CD8-positive, alpha-beta T cell (primary cell): ENCODE measurements at regions of chr17 and their contacts with region 1.

Region 1: GRCh38 chr17:64129764-64130558 is at the start of gene ERN1:
- DNase-seq: peak; percentile 83 to 96 (median 90)
- ATAC-seq: peak; percentile 90
- H3K4me3 ChIP-seq: peak within 1 kb of the TSS; percentile 70 to 76
- H3K4me3 Mint-ChIP-seq: peak within 1 kb of the TSS; percentile 89
- H3K27ac ChIP-seq: peak within 1 kb of the TSS; percentile 82 to 96
- H3K27ac Mint-ChIP-seq: peak within 1 kb of the TSS; percentile 97
- H3K4me1 ChIP-seq: peaks cover 23% of the 10 kb centered on the region
- H3K4me1 Mint-ChIP-seq: peaks cover 46% of the 10 kb centered on the region
- H3K27me3 ChIP-seq: no peaks in the 10 kb centered on the region
- H3K27me3 Mint-ChIP-seq: no peaks in the 10 kb centered on the region
- CTCF ChIP-seq: no peak
- total RNA-seq, gene ERN1: 57.1 to 64.0 TPM

Region 2: DNA sequence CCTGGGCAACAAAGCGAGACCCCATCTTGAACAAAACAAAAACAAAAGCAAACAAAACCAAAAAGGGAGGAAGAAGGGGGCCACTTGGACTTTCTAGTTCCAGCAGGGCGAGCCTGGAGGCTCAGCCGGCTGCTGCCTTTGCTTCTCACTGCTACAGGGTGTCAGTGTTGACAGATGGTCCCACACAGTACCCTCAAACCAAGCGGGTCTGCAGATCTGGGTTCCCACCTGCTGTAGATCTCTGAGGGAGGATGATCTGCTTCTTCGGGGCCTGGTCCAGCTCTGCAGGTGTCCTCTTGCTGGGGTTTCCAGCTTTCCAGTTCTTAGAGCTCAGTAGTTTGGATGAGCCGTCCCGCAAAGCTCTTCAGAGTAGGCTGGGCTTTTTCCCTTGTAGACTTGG is 225.6 kb before region 1 on chr17:
- CTCF ChIA-PET with region 1: interaction called, 11 read pairs
- POLR2A ChIA-PET with region 1: no interaction called
- intact Hi-C with region 1: no loop called
- DNase-seq: no peak
- ATAC-seq: no peak
- H3K4me3 ChIP-seq: no peak overlapping the region
- H3K4me3 Mint-ChIP-seq: no peak overlapping the region
- H3K27ac ChIP-seq: no peak overlapping the region
- H3K27ac Mint-ChIP-seq: no peak overlapping the region
- H3K4me1 ChIP-seq: no peaks in the 10 kb centered on the region
- H3K4me1 Mint-ChIP-seq: peaks cover 4% of the 10 kb centered on the region
- H3K27me3 ChIP-seq: no peaks in the 10 kb centered on the region
- H3K27me3 Mint-ChIP-seq: no peaks in the 10 kb centered on the region
- CTCF ChIP-seq: no peak

Region 3: DNA sequence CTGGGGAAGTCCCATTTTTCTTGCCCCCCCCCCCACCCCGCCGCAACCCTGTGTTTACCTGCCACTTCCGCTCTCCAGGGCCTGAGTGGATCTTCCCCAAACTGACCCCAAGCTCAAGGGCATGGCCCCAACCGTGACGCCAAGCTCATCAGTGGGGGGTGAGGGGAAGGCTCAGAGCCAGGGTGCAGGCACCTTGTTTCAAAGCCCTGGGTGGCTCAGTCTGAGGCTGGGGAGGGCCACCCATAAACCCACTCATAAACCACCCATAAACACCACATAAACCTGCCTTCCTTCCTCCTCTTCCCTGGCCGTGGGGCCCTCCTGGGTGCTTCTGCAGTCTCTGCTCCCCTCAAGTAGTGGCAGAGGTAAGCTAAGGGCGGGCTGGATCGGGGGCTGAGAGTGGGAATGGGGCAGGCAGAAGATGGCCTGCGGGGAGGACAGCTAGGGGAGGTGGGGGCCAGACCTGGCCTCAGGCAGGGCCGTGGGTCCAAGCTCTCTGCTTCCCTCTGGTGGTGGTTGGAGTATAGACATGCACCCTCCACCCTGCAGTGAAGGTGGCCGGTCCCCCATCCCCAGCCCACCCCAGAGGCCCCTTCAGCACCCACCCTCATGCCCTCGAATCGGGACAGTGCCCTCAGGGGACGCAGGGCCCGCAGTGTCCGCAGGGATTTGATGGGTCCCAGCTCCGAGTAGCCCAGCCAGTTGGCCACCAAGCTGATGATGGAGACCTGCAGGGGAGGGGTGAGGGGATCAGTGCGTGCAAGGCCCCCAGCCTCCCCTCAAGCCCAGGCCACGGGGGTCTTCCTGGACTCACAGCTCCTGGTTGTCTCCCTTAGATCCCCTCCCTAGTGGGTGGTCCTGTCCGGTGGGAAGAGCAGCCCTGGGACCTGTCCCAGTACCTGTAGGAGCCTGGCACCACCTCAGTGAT is 183.3 kb before region 1 on chr17:
- CTCF ChIA-PET with region 1: interaction called, 14 read pairs
- POLR2A ChIA-PET with region 1: interaction called, 4 read pairs
- intact Hi-C with region 1: no loop called
- DNase-seq: peak; percentile 22 to 77 (median 60)
- ATAC-seq: peak; percentile 78
- H3K4me3 ChIP-seq: peak overlapping the region; percentile 29 to 47
- H3K4me3 Mint-ChIP-seq: peak overlapping the region; percentile 74
- H3K27ac ChIP-seq: peak overlapping the region in 1 of 2 experiments; percentile 43
- H3K27ac Mint-ChIP-seq: peak overlapping the region; percentile 72
- H3K4me1 ChIP-seq: peaks cover 20% of the 10 kb centered on the region
- H3K4me1 Mint-ChIP-seq: peaks cover 20% of the 10 kb centered on the region
- H3K27me3 ChIP-seq: no peaks in the 10 kb centered on the region
- H3K27me3 Mint-ChIP-seq: no peaks in the 10 kb centered on the region
- CTCF ChIP-seq: peak; percentile 69

Region 4: DNA sequence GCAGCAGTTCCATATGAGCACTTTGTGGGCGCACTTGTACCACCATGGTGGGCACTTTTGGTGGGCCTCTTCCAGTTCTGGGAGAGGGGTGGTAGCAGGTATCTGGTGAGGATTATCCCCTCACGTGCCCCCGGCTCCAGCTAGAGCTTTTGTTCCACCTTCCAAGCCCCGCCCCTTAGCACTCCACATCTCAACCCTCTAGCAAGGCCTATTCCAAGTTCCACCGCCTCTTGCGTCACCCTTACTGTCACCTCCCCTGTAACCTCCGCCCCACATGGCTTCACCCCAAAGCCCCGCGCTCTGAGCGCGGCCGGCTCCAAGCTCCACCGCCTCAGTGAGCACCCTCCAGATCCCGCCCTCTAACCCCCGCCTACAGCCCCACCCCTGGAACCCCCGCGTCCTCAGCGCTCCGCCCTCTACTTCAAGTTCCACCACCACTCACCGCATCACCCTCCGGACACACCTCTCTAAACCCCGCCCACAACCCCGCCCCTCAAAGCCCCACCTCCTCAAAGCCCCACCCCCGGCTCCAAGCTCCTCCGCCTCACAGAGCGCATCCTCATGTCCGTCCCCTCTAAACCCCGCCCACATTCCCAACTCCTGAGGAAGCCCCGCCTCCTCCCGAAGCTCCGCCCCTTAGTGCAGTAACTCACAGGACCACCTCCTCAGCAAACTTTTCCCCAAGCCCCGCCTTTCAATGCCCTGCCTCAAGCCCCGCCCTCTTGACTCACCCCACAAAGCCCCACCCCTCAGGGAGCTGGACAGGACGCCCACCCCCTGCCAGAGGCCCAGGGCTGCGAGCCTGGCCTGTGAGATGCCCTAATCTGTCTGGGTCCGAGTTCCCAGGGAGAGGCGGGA is 168.4 kb before region 1 on chr17:
- CTCF ChIA-PET with region 1: no interaction called
- POLR2A ChIA-PET with region 1: no interaction called
- intact Hi-C with region 1: no loop called
- DNase-seq: peak in 5 of 9 experiments; percentile 20 to 59 (median 42)
- ATAC-seq: peak; percentile 81
- H3K4me3 ChIP-seq: no peak overlapping the region
- H3K4me3 Mint-ChIP-seq: peak overlapping the region; percentile 42
- H3K27ac ChIP-seq: no peak overlapping the region
- H3K27ac Mint-ChIP-seq: no peak overlapping the region
- H3K4me1 ChIP-seq: peaks cover 9% of the 10 kb centered on the region
- H3K4me1 Mint-ChIP-seq: peaks cover 10% of the 10 kb centered on the region
- H3K27me3 ChIP-seq: no peaks in the 10 kb centered on the region
- H3K27me3 Mint-ChIP-seq: no peaks in the 10 kb centered on the region
- CTCF ChIP-seq: no peak

Region 5: DNA sequence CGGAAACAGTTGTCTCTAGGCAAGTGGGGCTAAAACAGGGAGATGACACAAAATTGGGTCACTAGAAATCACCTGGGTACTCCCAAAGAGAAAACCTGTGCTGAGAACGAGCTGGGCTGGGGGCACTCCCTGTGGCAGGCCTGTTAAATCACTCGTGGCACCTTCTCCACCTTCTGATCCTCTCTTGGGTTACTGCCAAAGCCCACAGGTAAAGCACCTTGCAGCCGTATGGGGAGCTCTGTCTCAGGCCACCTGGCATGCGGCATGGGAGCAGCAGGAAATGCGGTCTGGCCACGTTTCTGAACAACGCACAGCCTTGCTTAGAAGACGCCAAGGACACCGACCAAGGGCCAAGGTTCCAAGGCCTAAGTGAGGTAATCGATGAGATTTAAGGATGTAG is 88.0 kb before region 1 on chr17:
- CTCF ChIA-PET with region 1: interaction called, 455 read pairs
- POLR2A ChIA-PET with region 1: interaction called, 3 read pairs
- intact Hi-C with region 1: no loop called
- DNase-seq: no peak
- ATAC-seq: no peak
- H3K4me3 ChIP-seq: no peak overlapping the region
- H3K4me3 Mint-ChIP-seq: no peak overlapping the region
- H3K27ac ChIP-seq: no peak overlapping the region
- H3K27ac Mint-ChIP-seq: peak overlapping the region; percentile 74
- H3K4me1 ChIP-seq: no peaks in the 10 kb centered on the region
- H3K4me1 Mint-ChIP-seq: peaks cover 9% of the 10 kb centered on the region
- H3K27me3 ChIP-seq: no peaks in the 10 kb centered on the region
- H3K27me3 Mint-ChIP-seq: no peaks in the 10 kb centered on the region
- CTCF ChIP-seq: no peak

Region 6: DNA sequence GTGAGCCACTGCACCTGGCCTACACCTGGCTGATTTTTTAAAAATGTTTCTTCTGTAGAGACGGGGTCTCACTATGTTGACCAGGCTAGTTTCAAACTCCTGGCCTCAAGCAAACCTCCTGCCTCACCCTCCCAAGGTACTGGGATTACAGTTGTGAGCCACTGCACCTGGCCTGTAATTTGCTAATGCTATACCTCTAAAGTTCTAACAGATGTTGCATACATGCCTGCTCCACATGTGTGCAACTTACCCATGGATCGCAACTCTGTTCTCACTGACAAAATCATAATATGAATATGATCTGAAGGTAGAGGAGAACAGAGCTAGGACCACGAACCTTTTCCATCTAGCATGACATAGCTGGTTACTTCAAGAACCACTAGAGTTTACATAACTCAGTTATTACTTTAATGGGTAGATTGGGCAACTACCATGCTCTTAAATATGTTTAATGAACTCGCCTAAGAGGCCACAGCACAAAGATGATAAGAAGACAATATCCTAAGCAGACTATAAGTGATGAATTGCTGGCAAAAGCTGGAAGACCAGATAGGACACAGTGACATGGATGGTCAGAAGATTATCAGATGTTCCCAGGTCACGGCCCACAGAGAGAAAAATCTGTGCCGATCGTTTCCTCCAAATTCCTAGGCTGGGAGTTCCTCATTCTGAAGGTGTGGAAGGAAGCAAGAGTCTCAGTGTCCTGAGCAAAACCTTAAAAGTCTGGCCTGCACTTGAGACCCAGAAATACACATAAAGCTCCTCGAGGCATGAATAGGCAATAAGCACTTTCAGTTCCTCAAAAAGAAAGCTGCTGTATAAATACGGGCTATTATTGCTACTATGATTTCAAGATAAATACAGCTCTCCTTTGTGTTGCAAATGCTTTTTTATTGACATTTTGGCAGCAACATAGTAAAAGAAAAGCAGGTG is 55.9 kb before region 1 on chr17:
- CTCF ChIA-PET with region 1: interaction called, 220 read pairs
- POLR2A ChIA-PET with region 1: interaction called, 3 read pairs
- intact Hi-C with region 1: no loop called
- DNase-seq: no peak
- ATAC-seq: no peak
- H3K4me3 ChIP-seq: no peak overlapping the region
- H3K4me3 Mint-ChIP-seq: no peak overlapping the region
- H3K27ac ChIP-seq: no peak overlapping the region
- H3K27ac Mint-ChIP-seq: no peak overlapping the region
- H3K4me1 ChIP-seq: no peaks in the 10 kb centered on the region
- H3K4me1 Mint-ChIP-seq: peaks cover 13% of the 10 kb centered on the region
- H3K27me3 ChIP-seq: no peaks in the 10 kb centered on the region
- H3K27me3 Mint-ChIP-seq: no peaks in the 10 kb centered on the region
- CTCF ChIP-seq: no peak

Region 7: GRCh38 chr17:64145757-64146417 is 15.9 kb after region 1 on chr17:
- CTCF ChIA-PET with region 1: interaction called, 41 read pairs
- POLR2A ChIA-PET with region 1: interaction called, 59 read pairs
- intact Hi-C with region 1: loop called (anchors 1 kb)
- DNase-seq: peak; percentile 88 to 99 (median 95)
- ATAC-seq: peak; percentile 88
- H3K4me3 ChIP-seq: peak overlapping the region; percentile 74 to 95
- H3K4me3 Mint-ChIP-seq: no peak overlapping the region
- H3K27ac ChIP-seq: peak overlapping the region; percentile 89 to 91
- H3K27ac Mint-ChIP-seq: no peak overlapping the region
- H3K4me1 ChIP-seq: peaks cover 16% of the 10 kb centered on the region
- H3K4me1 Mint-ChIP-seq: peaks cover 27% of the 10 kb centered on the region
- H3K27me3 ChIP-seq: no peaks in the 10 kb centered on the region
- H3K27me3 Mint-ChIP-seq: no peaks in the 10 kb centered on the region
- CTCF ChIP-seq: no peak

Region 8: DNA sequence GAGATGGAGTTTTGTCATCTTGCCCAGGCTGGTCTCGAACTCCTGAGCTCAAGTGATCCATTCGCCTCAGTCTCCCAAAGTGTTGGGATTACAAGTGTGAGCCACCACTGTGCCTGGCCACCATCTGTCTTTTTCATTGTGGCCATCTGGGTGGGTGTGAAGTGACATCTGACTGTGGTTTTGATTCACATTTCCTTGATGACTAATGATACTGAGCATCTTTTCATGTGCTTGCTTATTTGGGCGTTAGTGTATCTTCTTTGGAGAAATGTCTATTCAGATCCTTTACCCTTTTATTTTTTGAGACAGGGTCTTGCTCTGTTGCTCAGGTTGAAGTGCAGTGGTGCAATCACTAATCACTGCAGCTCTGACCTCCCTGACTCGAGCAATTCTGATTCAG is 53.9 kb after region 1 on chr17:
- CTCF ChIA-PET with region 1: no interaction called
- POLR2A ChIA-PET with region 1: no interaction called
- intact Hi-C with region 1: no loop called
- DNase-seq: peak in 2 of 9 experiments; percentile 8 to 9
- ATAC-seq: no peak
- H3K4me3 ChIP-seq: no peak overlapping the region
- H3K4me3 Mint-ChIP-seq: no peak overlapping the region
- H3K27ac ChIP-seq: no peak overlapping the region
- H3K27ac Mint-ChIP-seq: no peak overlapping the region
- H3K4me1 ChIP-seq: no peaks in the 10 kb centered on the region
- H3K4me1 Mint-ChIP-seq: no peaks in the 10 kb centered on the region
- H3K27me3 ChIP-seq: no peaks in the 10 kb centered on the region
- H3K27me3 Mint-ChIP-seq: no peaks in the 10 kb centered on the region
- CTCF ChIP-seq: no peak

Region 9: GRCh38 chr17:64200080-64201032 is 70.4 kb after region 1 on chr17:
- CTCF ChIA-PET with region 1: no interaction called
- POLR2A ChIA-PET with region 1: no interaction called
- intact Hi-C with region 1: no loop called
- DNase-seq: no peak
- ATAC-seq: no peak
- H3K4me3 ChIP-seq: no peak overlapping the region
- H3K4me3 Mint-ChIP-seq: no peak overlapping the region
- H3K27ac ChIP-seq: no peak overlapping the region
- H3K27ac Mint-ChIP-seq: no peak overlapping the region
- H3K4me1 ChIP-seq: no peaks in the 10 kb centered on the region
- H3K4me1 Mint-ChIP-seq: peaks cover 17% of the 10 kb centered on the region
- H3K27me3 ChIP-seq: no peaks in the 10 kb centered on the region
- H3K27me3 Mint-ChIP-seq: no peaks in the 10 kb centered on the region
- CTCF ChIP-seq: no peak

Region 10: DNA sequence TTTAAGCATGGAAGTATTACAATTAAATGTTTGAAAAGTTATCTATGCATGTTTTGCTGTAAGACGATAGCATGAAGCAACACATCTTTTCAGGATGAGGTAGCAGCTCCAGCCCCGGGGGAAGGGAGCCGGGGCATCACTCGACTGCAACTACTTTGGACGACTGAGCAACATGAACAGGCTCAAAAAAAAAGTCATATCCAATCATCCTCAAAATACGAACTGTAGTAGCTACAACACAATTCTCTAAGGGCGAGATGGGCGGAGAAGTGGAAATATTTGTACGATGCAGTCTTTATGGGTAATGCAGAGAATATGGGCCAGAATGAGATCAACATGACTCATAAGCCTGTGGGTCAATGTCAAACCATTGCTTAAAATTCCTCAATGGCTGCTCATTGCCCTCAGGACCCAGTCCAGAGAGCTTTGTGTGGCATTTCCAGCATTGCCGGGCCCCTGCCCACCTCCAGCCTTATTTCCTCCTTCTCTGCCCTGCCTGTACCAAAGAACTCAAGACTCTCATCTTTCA is 549.8 kb after region 1 on chr17:
- CTCF ChIA-PET with region 1: no interaction called
- POLR2A ChIA-PET with region 1: no interaction called
- intact Hi-C with region 1: no loop called
- DNase-seq: no peak
- ATAC-seq: no peak
- H3K4me3 ChIP-seq: no peak overlapping the region
- H3K4me3 Mint-ChIP-seq: no peak overlapping the region
- H3K27ac ChIP-seq: no peak overlapping the region
- H3K27ac Mint-ChIP-seq: no peak overlapping the region
- H3K4me1 ChIP-seq: no peaks in the 10 kb centered on the region
- H3K4me1 Mint-ChIP-seq: no peaks in the 10 kb centered on the region
- H3K27me3 ChIP-seq: no peaks in the 10 kb centered on the region
- H3K27me3 Mint-ChIP-seq: no peaks in the 10 kb centered on the region
- CTCF ChIP-seq: no peak